Spleen (tissue), 13 donors: ENCODE measurements at regions of chr2 and their contacts with region 1.

Region 1: DNA sequence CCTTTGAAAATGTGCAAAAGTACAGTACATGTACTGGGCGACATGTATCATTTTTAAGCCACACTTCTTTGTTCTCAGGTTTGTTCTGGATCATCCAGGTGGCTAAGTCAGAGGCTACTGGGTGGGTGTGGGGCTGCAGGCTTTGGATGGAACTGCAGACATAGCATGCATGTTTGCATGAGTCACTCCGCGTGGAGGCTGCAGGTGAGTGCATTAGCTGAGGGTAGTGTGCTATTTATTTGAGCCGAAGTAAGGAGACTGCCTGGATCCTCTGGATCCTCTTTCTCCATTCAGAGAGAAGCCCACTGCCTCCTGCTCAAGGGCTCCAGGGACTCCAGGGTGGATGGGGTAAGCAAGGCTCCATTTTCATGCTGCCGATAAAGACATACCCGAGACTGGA is 9.4 kb upstream of the NEURL3 start:
- DNase-seq: no peak
- H3K4me3 ChIP-seq: no peak overlapping the region
- H3K27ac ChIP-seq: no peak overlapping the region
- H3K4me1 ChIP-seq: peaks cover 0 to 5% (median 1%) of the 10 kb centered on the region in 6 donors
- H3K27me3 ChIP-seq: peaks cover 0 to 13% (median 0%) of the 10 kb centered on the region in 7 donors
- CTCF ChIP-seq: no peak
- POLR2A ChIP-seq: no peak

Region 2: GRCh38 chr2:96265840-96266679 is 248.5 kb before region 1 on chr2 and contains the starts of genes CIAO1 and TMEM127:
- intact Hi-C with region 1: no loop called
- DNase-seq: peak; percentile 100
- H3K4me3 ChIP-seq: peak within 1 kb of the TSS; percentile 83 to 98 (median 93)
- H3K27ac ChIP-seq: peak within 1 kb of the TSS; percentile 75 to 99 (median 94)
- H3K4me1 ChIP-seq: peaks cover 37 to 65% (median 56%) of the 10 kb centered on the region in 6 donors
- H3K27me3 ChIP-seq: no peaks in the 10 kb centered on the region
- CTCF ChIP-seq: peak; percentile 11 to 56 (median 28)
- POLR2A ChIP-seq: peak; percentile 54 to 74 (median 65)
- total RNA-seq, gene CIAO1: 63.9 to 122 (median 76.7) TPM
- total RNA-seq, gene TMEM127: 61.1 to 83.3 (median 70.0) TPM

Region 3: DNA sequence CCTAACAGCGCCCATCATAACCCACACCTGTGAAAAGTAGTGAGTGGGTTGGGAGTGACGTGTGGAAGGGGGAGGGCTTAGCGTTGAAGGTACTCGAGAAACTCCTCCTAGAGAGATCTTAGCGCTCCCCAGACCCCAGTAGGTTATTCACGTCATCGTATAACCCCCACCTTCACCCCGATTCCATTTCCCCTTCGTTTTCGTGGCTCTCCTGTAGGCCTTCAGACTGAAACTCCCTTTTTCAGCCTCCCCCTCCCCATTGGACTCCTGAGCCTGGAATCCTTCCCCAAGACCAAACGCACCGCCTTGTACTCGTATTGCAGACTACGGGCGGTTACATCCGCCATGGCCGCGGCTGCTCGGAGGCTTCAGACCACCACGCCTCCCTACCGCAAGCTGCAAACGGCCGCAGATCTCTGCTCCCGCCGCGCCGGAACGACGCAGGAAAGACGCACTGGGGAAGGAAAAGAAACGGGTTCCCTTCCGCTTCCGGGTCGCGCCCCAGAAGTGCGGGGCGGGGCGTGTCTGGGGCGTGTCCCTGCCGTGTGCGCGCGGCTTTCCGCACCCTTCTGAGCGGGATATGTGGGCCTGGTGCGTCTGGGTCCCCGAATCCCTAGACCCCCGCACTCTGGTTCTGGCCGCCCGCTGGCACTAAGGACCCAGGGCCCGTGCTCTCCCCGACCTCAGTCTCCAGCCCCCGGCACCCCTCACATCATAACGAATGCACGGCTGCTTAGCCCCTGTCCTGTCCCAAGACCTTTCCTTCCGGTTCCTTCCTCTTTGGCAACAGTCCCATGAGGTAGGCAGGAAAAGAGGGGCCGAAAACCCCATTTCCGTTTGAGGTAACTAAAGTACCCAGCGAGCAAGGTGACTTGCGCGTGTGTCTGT is 209.2 kb before region 1 on chr2 and contains the start of gene SNRNP200:
- intact Hi-C with region 1: loop called (anchors 10 kb)
- DNase-seq: peak; percentile 96
- H3K4me3 ChIP-seq: peak within 1 kb of the TSS; percentile 72 to 84 (median 81)
- H3K27ac ChIP-seq: peak within 1 kb of the TSS; percentile 64 to 94 (median 89)
- H3K4me1 ChIP-seq: peaks cover 20 to 71% (median 41%) of the 10 kb centered on the region in 6 donors
- H3K27me3 ChIP-seq: no peaks in the 10 kb centered on the region
- CTCF ChIP-seq: peak in 2 of 11 experiments; percentile 12 to 15
- POLR2A ChIP-seq: peak; percentile 49 to 77 (median 66)
- total RNA-seq, gene SNRNP200: 110 to 139 (median 130) TPM

Region 4: GRCh38 chr2:96449637-96450036 is 64.9 kb before region 1 on chr2:
- intact Hi-C with region 1: no loop called
- DNase-seq: no peak
- H3K4me3 ChIP-seq: no peak overlapping the region
- H3K27ac ChIP-seq: no peak overlapping the region
- H3K4me1 ChIP-seq: peaks cover 0 to 6% (median 0%) of the 10 kb centered on the region in 6 donors
- H3K27me3 ChIP-seq: no peaks in the 10 kb centered on the region
- CTCF ChIP-seq: no peak
- POLR2A ChIP-seq: no peak